CD4-positive, alpha-beta memory T cell (primary cell): ENCODE measurements at regions of chr2 and their contacts with region 1.

Region 1: GRCh38 chr2:6896930-6897759 is 19.6 kb downstream of the RSAD2 start:
- DNase-seq: peak in 4 of 5 donors; percentile 39 to 51 (median 46)
- H3K4me3 ChIP-seq: no peak overlapping the region
- H3K4me3 Mint-ChIP-seq: no peak overlapping the region
- H3K27ac ChIP-seq: no peak overlapping the region
- H3K27ac Mint-ChIP-seq: peak overlapping the region in 1 of 7 donors; percentile 16
- H3K4me1 ChIP-seq: no peaks in the 10 kb centered on the region
- H3K4me1 Mint-ChIP-seq: peaks cover 0 to 10% (median 0%) of the 10 kb centered on the region in 4 donors
- H3K27me3 ChIP-seq: no peaks in the 10 kb centered on the region
- H3K27me3 Mint-ChIP-seq: no peaks in the 10 kb centered on the region

Region 2: GRCh38 chr2:6877402-6878304 is 19.5 kb before region 1 on chr2 and contains the start of gene RSAD2:
- CTCF ChIA-PET with region 1: interaction called, 13 read pairs
- POLR2A ChIA-PET with region 1: interaction called, 4 read pairs
- intact Hi-C with region 1: no loop called
- DNase-seq: peak; percentile 52 to 61 (median 56)
- H3K4me3 ChIP-seq: peak within 1 kb of the TSS; percentile 52 to 67
- H3K4me3 Mint-ChIP-seq: peak within 1 kb of the TSS; percentile 85 to 93 (median 90)
- H3K27ac ChIP-seq: peak within 1 kb of the TSS; percentile 59
- H3K27ac Mint-ChIP-seq: peak within 1 kb of the TSS; percentile 82 to 93 (median 90)
- H3K4me1 ChIP-seq: peaks cover 54% of the 10 kb centered on the region
- H3K4me1 Mint-ChIP-seq: peaks cover 41 to 57% (median 46%) of the 10 kb centered on the region in 4 donors
- H3K27me3 ChIP-seq: no peaks in the 10 kb centered on the region
- H3K27me3 Mint-ChIP-seq: no peaks in the 10 kb centered on the region
- total RNA-seq, gene RSAD2: 3.8 to 4.9 TPM

Region 3: DNA sequence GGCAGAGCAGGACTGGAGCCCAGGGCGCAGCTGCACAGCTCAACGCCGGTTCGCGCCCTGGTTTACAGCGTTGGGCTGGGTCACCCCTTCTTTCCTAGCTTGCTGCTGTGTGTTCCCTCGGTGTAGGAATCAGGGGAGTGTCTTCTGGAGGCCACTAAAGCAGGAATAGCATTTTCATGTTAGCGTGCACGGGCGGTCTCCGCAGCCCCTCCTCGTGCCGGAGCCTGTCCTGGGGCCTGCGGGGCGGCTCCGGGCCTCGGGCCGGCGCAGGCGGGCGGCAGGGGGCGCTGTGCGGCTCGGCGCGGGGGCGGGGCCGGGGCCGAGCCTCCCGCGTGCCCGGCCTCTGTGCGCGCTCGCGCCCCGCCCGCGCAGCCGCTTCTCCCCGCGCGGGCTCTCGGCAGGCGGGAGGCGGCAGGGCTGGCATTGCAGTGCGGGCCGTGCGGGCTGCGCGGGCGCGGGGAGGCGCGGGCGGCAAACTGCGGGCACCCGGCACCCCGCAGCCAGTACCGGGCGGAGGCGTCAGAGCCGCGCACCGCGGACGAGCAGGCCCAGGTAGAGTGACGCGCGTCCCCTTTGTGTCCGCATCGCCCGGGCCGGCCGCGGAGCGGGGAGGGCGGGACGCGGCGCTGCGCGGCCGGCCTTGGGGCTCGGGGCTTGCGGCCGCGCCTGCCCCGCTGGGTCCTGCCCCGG is 20.1 kb after region 1 on chr2 and contains the start of gene RNF144A:
- CTCF ChIA-PET with region 1: interaction called, 183 read pairs
- POLR2A ChIA-PET with region 1: interaction called, 4 read pairs
- intact Hi-C with region 1: no loop called
- DNase-seq: peak; percentile 64 to 83 (median 76)
- H3K4me3 ChIP-seq: peak within 1 kb of the TSS; percentile 44 to 47
- H3K4me3 Mint-ChIP-seq: peak within 1 kb of the TSS; percentile 72 to 84 (median 78)
- H3K27ac ChIP-seq: peak within 1 kb of the TSS; percentile 43
- H3K27ac Mint-ChIP-seq: peak within 1 kb of the TSS in 5 of 7 donors; percentile 57 to 88 (median 74)
- H3K4me1 ChIP-seq: peaks cover 68% of the 10 kb centered on the region
- H3K4me1 Mint-ChIP-seq: peaks cover 46 to 79% (median 60%) of the 10 kb centered on the region in 4 donors
- H3K27me3 ChIP-seq: no peaks in the 10 kb centered on the region
- H3K27me3 Mint-ChIP-seq: no peaks in the 10 kb centered on the region
- total RNA-seq, gene RNF144A: 34.3 to 41.1 TPM

Region 4: GRCh38 chr2:6957910-6958615 is 60.9 kb after region 1 on chr2:
- CTCF ChIA-PET with region 1: interaction called, 4 read pairs
- POLR2A ChIA-PET with region 1: no interaction called
- intact Hi-C with region 1: loop called (anchors 10 kb)
- DNase-seq: no peak
- H3K4me3 ChIP-seq: no peak overlapping the region
- H3K4me3 Mint-ChIP-seq: no peak overlapping the region
- H3K27ac ChIP-seq: no peak overlapping the region
- H3K27ac Mint-ChIP-seq: peak overlapping the region in 1 of 7 donors; percentile 20
- H3K4me1 ChIP-seq: no peaks in the 10 kb centered on the region
- H3K4me1 Mint-ChIP-seq: peaks cover 20 to 57% (median 34%) of the 10 kb centered on the region in 4 donors
- H3K27me3 ChIP-seq: no peaks in the 10 kb centered on the region
- H3K27me3 Mint-ChIP-seq: no peaks in the 10 kb centered on the region

Region 5: GRCh38 chr2:7031547-7032245 is 134.6 kb after region 1 on chr2:
- CTCF ChIA-PET with region 1: interaction called, 22 read pairs
- POLR2A ChIA-PET with region 1: no interaction called
- intact Hi-C with region 1: loop called (anchors 1 kb)
- DNase-seq: peak; percentile 74 to 87 (median 80)
- H3K4me3 ChIP-seq: no peak overlapping the region
- H3K4me3 Mint-ChIP-seq: peak overlapping the region in 1 of 8 donors; percentile 65
- H3K27ac ChIP-seq: peak overlapping the region; percentile 15
- H3K27ac Mint-ChIP-seq: peak overlapping the region; percentile 76 to 93 (median 88)
- H3K4me1 ChIP-seq: peaks cover 12% of the 10 kb centered on the region
- H3K4me1 Mint-ChIP-seq: peaks cover 11 to 34% (median 21%) of the 10 kb centered on the region in 4 donors
- H3K27me3 ChIP-seq: no peaks in the 10 kb centered on the region
- H3K27me3 Mint-ChIP-seq: no peaks in the 10 kb centered on the region

Region 6: DNA sequence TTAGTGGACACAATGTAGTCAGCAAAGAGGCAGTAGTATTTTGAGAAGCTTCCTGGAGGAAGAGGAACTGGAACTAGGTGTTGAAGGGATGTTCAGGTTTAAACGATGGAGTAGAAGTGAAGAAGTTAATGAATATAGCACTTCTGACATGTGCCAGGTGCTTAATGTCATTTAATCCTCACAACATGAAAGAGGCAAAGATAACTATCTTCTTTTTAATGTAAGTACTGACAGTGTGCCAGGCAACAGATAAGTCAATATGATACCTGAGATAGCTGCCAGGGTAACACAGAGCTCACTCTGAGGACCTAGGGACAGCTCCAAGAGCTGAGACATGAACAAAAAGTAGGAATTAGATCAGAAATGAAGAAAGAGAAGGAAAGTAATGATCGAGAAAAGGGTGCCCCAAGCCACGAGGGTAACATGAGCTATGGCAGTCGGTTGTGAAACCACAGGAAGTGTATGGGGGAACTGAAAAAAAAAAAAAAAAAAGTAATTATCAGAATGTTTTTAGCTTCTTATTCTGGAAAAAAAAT is 160.8 kb after region 1 on chr2:
- CTCF ChIA-PET with region 1: interaction called, 13 read pairs
- POLR2A ChIA-PET with region 1: no interaction called
- intact Hi-C with region 1: no loop called
- DNase-seq: peak in 4 of 5 donors; percentile 38 to 54 (median 40)
- H3K4me3 ChIP-seq: peak overlapping the region in 1 of 2 donors; percentile 39
- H3K4me3 Mint-ChIP-seq: peak overlapping the region; percentile 63 to 88 (median 82)
- H3K27ac ChIP-seq: peak overlapping the region; percentile 24
- H3K27ac Mint-ChIP-seq: peak overlapping the region in 6 of 7 donors; percentile 86 to 95 (median 92)
- H3K4me1 ChIP-seq: peaks cover 46% of the 10 kb centered on the region
- H3K4me1 Mint-ChIP-seq: peaks cover 0 to 31% (median 26%) of the 10 kb centered on the region in 4 donors
- H3K27me3 ChIP-seq: no peaks in the 10 kb centered on the region
- H3K27me3 Mint-ChIP-seq: no peaks in the 10 kb centered on the region